PC-9 (cell line): ENCODE measurements at regions of chr2 and their contacts with region 1.

Region 1: GRCh38 chr2:227528803-227529202 is 56.8 kb downstream of the AGFG1 start:
- DNase-seq: no peak
- H3K4me3 ChIP-seq: no peak overlapping the region
- H3K27ac ChIP-seq: peak overlapping the region; percentile 16; the same call in 1 of the 2 replicates
- H3K4me1 ChIP-seq: no peaks in the 10 kb centered on the region
- H3K27me3 ChIP-seq: no peaks in the 10 kb centered on the region
- CTCF ChIP-seq: no peak

Region 2: DNA sequence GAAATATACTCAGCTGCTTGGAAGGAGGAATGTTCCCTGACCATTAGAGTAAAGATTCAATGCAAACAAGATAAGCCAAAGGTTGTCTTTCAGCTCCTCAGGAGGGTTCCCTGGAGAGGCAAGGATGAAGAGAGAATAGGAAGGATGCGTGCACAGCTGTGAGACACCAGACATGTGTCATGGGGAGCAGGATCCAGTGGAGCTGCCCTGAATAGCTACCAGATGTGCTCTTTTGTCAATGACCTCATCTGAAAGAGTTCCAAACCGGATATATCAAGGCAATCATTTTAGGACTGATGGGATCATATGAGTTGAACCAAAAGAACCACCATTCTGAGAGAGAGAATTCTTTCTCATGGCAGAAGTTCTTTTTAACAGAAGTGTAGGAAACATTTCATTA is 1219.8 kb before region 1 on chr2:
- CTCF ChIA-PET with region 1: no interaction called
- POLR2A ChIA-PET with region 1: no interaction called
- intact Hi-C with region 1: no loop called
- DNase-seq: no peak
- H3K4me3 ChIP-seq: no peak overlapping the region
- H3K27ac ChIP-seq: no peak overlapping the region
- H3K4me1 ChIP-seq: no peaks in the 10 kb centered on the region
- H3K27me3 ChIP-seq: no peaks in the 10 kb centered on the region
- CTCF ChIP-seq: no peak

Region 3: GRCh38 chr2:227491386-227491785 is 37.4 kb before region 1 on chr2:
- CTCF ChIA-PET with region 1: no interaction called
- POLR2A ChIA-PET with region 1: no interaction called
- intact Hi-C with region 1: no loop called
- DNase-seq: no peak
- H3K4me3 ChIP-seq: no peak overlapping the region
- H3K27ac ChIP-seq: no peak overlapping the region
- H3K4me1 ChIP-seq: peaks cover 10% of the 10 kb centered on the region; the same call in 1 of the 2 replicates
- H3K27me3 ChIP-seq: no peaks in the 10 kb centered on the region
- CTCF ChIP-seq: no peak

Region 4: GRCh38 chr2:227503433-227504406 is 25.1 kb before region 1 on chr2:
- CTCF ChIA-PET with region 1: no interaction called
- POLR2A ChIA-PET with region 1: no interaction called
- intact Hi-C with region 1: no loop called
- DNase-seq: peak; percentile 77 to 94
- H3K4me3 ChIP-seq: peak overlapping the region; percentile 21; the same call in 1 of the 2 replicates
- H3K27ac ChIP-seq: peak overlapping the region; percentile 90
- H3K4me1 ChIP-seq: peaks cover 72% of the 10 kb centered on the region
- H3K27me3 ChIP-seq: no peaks in the 10 kb centered on the region
- CTCF ChIP-seq: no peak

Region 5: DNA sequence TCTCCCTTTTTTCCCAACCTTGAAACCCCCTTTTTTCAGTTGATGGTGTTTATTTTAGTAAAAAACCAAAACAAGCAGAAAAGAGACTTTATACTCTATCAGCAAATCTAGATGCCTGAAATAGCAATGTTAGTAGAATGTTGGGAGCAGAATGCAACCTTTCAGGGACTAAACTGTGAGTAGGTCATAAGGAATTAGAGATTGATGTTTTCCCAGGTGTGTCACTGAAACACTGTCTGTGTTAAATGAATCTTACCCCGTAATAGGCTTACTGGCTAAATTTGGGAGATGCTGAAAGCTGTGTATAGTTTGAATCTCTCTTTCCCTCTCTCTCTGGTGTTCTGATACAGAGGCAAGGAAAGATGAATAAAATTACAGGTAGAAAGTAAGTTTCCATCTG is 13.1 kb before region 1 on chr2:
- CTCF ChIA-PET with region 1: no interaction called
- POLR2A ChIA-PET with region 1: interaction called, 4 read pairs
- intact Hi-C with region 1: loop called (anchors 1 kb)
- DNase-seq: no peak
- H3K4me3 ChIP-seq: no peak overlapping the region
- H3K27ac ChIP-seq: 0 out of 2 replicates have a peak overlapping the region, but pooled peaks have one; percentile 24
- H3K4me1 ChIP-seq: peaks cover 34% of the 10 kb centered on the region
- H3K27me3 ChIP-seq: no peaks in the 10 kb centered on the region
- CTCF ChIP-seq: no peak

Region 6: DNA sequence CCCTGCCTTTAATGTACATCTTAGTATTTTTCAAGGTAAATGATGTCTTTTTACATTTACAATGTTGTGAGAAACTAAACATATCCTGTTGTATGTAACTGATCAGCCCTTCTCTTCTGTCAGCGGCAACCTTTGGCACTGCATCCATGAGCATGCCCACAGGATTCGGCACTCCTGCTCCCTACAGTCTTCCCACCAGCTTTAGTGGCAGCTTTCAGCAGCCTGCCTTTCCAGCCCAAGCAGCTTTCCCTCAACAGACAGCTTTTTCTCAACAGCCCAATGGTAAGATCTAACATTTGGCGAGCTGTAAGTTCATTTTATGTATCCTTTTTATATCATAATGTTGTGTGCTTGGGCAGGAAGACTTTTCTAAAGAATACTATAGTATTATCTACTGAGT is 23.0 kb after region 1 on chr2:
- CTCF ChIA-PET with region 1: no interaction called
- POLR2A ChIA-PET with region 1: no interaction called
- intact Hi-C with region 1: loop called (anchors 1 kb)
- DNase-seq: no peak
- H3K4me3 ChIP-seq: no peak overlapping the region
- H3K27ac ChIP-seq: no peak overlapping the region
- H3K4me1 ChIP-seq: no peaks in the 10 kb centered on the region
- H3K27me3 ChIP-seq: no peaks in the 10 kb centered on the region
- CTCF ChIP-seq: no peak